H1 (cell line): ENCODE measurements at regions of chr2 and their contacts with region 1.

Region 1: GRCh38 chr2:26982102-26982742 is 11.8 kb downstream of the MAPRE3 start:
- DNase-seq: no peak
- H3K4me3 ChIP-seq: no peak overlapping the region
- H3K27ac ChIP-seq: no peak overlapping the region
- H3K4me1 ChIP-seq: no peaks in the 10 kb centered on the region
- H3K27me3 ChIP-seq: no peaks in the 10 kb centered on the region
- CTCF ChIP-seq: peak in 2 of 3 experiments; percentile 35 to 58; a peak in 3 of 4 replicates
- EP300 ChIP-seq: no peak
- POLR2A ChIP-seq: no peak
- RAD21 ChIP-seq: no peak; a peak in 1 of 4 replicates

Region 2: DNA sequence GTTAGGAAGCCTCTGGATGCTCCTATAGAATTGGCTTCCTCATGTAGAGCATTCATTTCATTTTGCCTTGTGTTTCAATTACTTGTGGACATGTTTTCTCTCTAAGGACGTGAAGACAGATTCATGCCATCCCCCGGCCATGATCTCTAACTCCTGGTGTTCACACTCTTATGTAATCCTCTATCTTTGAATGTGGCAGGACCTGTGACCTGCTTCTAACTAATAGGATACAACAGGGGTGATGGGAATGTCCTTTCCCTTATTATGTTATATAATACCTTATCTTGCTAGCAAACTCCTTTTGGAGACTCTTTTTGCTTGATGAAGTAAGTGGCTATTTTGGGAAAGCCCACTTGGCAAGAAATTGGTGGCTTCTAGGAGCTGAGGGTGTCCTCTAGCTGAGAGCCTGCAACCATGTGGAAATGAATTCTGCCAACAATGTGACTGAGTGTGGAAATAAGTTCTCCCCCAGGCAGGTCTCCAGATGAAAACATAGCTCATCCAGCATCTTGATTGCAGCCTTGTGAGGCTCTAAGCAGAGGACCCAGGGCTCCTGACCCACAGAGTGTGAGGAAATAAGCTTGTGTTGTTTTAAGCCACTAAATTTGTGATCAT is 120.5 kb before region 1 on chr2:
- CTCF ChIA-PET with region 1: no interaction called
- POLR2A ChIA-PET with region 1: no interaction called
- DNase-seq: peak in 1 of 2 experiments; percentile 4
- H3K4me3 ChIP-seq: no peak overlapping the region
- H3K27ac ChIP-seq: no peak overlapping the region
- H3K4me1 ChIP-seq: no peaks in the 10 kb centered on the region
- H3K27me3 ChIP-seq: peaks cover 0 to 2% (median 0%) of the 10 kb centered on the region in 4 experiments; a peak in 1 of 7 replicates
- CTCF ChIP-seq: no peak
- EP300 ChIP-seq: no peak
- POLR2A ChIP-seq: no peak
- RAD21 ChIP-seq: no peak

Region 3: DNA sequence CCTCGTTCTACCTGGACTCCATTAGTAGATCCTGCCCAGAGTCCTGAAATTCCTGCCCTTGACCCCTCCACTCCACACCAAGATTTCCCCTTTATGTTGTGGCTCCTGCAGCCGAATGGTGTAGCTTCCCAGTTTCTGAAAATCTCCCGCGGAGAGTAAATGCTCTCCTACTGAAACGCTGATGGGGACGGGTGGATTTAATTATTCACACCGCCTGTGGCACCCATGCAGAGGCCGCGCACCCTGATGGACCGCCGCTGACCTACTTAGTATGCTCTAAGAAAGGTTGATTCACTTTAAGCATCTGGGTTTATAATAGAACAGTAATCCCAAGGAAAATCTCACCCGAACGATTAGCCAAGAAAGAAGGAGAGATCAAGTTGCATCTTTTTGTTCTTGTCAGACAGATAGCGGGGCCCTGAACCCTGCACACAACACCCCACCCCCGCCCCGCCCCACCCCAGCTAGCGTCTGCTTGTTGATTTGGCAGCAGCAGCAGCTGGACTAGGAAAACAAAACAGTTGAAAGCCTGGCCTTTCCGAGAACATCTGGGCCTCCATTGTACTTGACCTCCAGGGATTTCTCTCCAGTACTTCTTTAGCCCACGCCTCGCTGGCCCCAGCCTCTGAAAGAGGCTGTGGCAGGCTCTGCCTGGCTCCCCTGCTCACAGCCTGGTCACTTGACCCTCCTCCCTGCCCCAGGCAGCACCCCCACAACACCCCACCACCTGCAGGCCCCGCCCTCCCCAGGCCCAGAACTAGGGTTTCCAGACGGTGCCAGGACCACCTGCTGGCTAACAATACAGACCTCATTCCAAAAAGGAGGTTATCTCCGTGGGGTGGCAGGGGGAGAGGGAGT is 80.7 kb before region 1 on chr2:
- CTCF ChIA-PET with region 1: no interaction called
- POLR2A ChIA-PET with region 1: no interaction called
- DNase-seq: no peak
- H3K4me3 ChIP-seq: peak overlapping the region in 1 of 4 experiments; percentile 41; a peak in 1 of 8 replicates
- H3K27ac ChIP-seq: no peak overlapping the region
- H3K4me1 ChIP-seq: peaks cover 8 to 17% (median 12%) of the 10 kb centered on the region in 4 experiments; a peak in 6 of 7 replicates
- H3K27me3 ChIP-seq: 0 out of 7 replicates have a peak, but pooled peaks cover 0 to 2% (median 0%) of the 10 kb centered on the region in 4 experiments
- CTCF ChIP-seq: no peak
- EP300 ChIP-seq: no peak
- POLR2A ChIP-seq: no peak
- RAD21 ChIP-seq: no peak

Region 4: DNA sequence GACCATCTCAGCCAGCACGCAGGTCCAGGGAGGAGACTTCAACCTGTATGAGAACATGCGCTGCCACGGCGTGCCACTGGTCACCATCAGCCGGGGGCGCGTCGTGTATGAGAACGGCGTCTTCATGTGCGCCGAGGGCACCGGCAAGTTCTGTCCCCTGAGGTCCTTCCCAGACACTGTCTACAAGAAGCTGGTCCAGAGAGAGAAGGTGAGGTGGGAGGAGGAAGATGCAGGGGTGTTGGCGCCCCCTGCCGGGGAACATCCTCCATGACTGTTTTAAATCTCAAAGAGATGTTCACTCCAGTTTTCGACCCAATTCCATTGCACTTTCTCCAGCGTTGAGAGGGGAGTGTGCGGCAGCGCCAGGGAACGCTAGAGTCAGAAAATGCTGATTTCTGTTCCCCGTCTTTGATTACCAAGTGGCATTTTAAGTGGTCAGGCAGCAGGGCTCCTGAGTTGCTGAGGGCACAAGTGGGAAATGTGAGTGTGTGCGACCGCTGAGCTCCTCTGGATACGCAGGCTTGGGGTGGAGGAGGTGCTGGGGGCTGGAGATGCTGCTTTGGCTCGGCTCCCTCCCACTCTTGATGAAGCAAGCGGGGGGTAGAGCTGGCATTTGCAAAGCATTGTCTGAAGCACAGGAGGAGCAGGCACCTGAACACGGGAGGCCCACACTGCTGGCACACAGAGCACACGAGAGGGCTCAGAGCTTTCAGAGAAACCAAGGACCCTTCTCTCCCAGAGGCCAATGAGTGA is 39.5 kb before region 1 on chr2:
- CTCF ChIA-PET with region 1: interaction called, 10 read pairs
- POLR2A ChIA-PET with region 1: no interaction called
- DNase-seq: peak; percentile 69 to 91
- H3K4me3 ChIP-seq: peak overlapping the region; percentile 37 to 59 (median 40); a peak in 7 of 8 replicates
- H3K27ac ChIP-seq: no peak overlapping the region
- H3K4me1 ChIP-seq: peaks cover 2 to 23% (median 7%) of the 10 kb centered on the region in 4 experiments
- H3K27me3 ChIP-seq: peaks cover 0 to 3% (median 0%) of the 10 kb centered on the region in 4 experiments; a peak in 1 of 7 replicates
- CTCF ChIP-seq: peak; percentile 85 to 90 (median 85)
- EP300 ChIP-seq: no peak
- POLR2A ChIP-seq: no peak
- RAD21 ChIP-seq: peak; percentile 82 to 89

Region 5: GRCh38 chr2:26959331-26959730 is 22.9 kb before region 1 on chr2:
- CTCF ChIA-PET with region 1: interaction called, 47 read pairs
- POLR2A ChIA-PET with region 1: interaction called, 3 read pairs
- DNase-seq: no peak
- H3K4me3 ChIP-seq: no peak overlapping the region
- H3K27ac ChIP-seq: no peak overlapping the region
- H3K4me1 ChIP-seq: peaks cover 0 to 2% (median 0%) of the 10 kb centered on the region in 4 experiments; a peak in 1 of 7 replicates
- H3K27me3 ChIP-seq: no peaks in the 10 kb centered on the region; a peak in 1 of 7 replicates
- CTCF ChIP-seq: no peak
- EP300 ChIP-seq: no peak
- POLR2A ChIP-seq: no peak
- RAD21 ChIP-seq: no peak

Region 6: DNA sequence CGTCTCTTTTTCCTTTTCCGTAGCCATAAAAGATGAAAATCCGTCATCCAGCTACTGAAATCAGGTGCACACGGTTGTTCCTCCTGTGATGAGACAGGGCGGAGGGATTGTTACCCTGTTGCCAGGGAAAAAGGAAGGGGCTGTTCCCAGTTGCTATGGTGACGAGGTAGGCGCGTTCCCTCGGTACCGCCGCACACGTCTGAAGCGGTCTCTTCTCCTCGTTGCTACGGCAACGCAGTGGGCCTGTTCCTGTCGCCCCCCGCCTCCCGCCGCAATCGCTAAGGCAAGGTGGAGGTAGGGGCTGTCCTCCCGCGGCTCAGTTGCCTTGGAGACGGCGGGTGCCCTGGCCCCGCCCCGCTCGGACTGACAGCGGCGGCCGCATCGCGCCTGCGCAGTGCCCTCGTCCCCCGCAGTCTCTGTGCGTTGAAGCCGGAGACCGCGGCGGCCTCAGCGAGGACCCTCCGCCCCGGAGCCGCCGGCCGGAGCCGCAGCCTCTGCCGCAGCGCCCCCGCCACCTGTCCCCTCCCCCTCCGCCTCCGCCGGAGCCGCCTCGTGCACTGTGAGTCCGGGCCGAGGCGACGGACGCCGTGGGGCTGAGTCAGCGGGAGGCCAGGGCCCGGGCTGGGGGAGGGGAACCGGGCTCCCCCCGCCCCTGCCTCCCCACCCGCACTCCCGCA is 11.8 kb before region 1 on chr2 and contains the start of gene MAPRE3:
- CTCF ChIA-PET with region 1: interaction called, 20 read pairs
- POLR2A ChIA-PET with region 1: interaction called, 12 read pairs
- DNase-seq: peak; percentile 90 to 97
- H3K4me3 ChIP-seq: peak within 1 kb of the TSS; percentile 63 to 95 (median 90)
- H3K27ac ChIP-seq: no peak within 1 kb of the TSS
- H3K4me1 ChIP-seq: peaks cover 0 to 6% (median 4%) of the 10 kb centered on the region in 4 experiments; a peak in 5 of 7 replicates
- H3K27me3 ChIP-seq: peaks cover 0 to 16% (median 3%) of the 10 kb centered on the region in 4 experiments; a peak in 4 of 7 replicates
- CTCF ChIP-seq: no peak
- EP300 ChIP-seq: no peak
- POLR2A ChIP-seq: no peak
- RAD21 ChIP-seq: no peak
- total RNA-seq, gene MAPRE3: 6.6 and 7.5 TPM in 2 replicates

Region 7: DNA sequence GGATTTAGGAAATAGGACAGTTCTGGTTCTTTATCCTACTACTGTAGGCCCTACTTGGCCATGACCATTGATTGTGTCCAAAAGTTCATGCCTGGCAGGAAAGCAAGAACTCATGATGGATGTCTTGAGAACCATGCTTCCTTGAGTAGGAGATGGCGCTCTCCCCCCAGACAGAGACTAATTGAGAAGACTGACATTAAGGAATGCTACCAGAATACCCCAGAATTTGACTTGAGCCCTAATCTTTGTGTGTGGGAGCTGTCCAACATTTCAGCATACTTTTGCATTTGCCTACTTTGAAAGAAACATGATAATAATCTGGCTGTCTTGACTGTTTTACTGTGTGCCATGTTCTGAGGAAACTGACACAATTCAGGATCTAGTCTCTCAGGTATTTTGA is 11.5 kb after region 1 on chr2:
- CTCF ChIA-PET with region 1: interaction called, 37 read pairs
- POLR2A ChIA-PET with region 1: interaction called, 3 read pairs
- DNase-seq: no peak
- H3K4me3 ChIP-seq: no peak overlapping the region
- H3K27ac ChIP-seq: no peak overlapping the region
- H3K4me1 ChIP-seq: no peaks in the 10 kb centered on the region
- H3K27me3 ChIP-seq: no peaks in the 10 kb centered on the region
- CTCF ChIP-seq: no peak
- EP300 ChIP-seq: no peak
- POLR2A ChIP-seq: no peak
- RAD21 ChIP-seq: no peak

Region 8: GRCh38 chr2:27010139-27010538 is 27.9 kb after region 1 on chr2:
- CTCF ChIA-PET with region 1: interaction called, 36 read pairs
- POLR2A ChIA-PET with region 1: no interaction called
- DNase-seq: no peak
- H3K4me3 ChIP-seq: no peak overlapping the region
- H3K27ac ChIP-seq: no peak overlapping the region
- H3K4me1 ChIP-seq: no peaks in the 10 kb centered on the region
- H3K27me3 ChIP-seq: no peaks in the 10 kb centered on the region; a peak in 1 of 7 replicates
- CTCF ChIP-seq: no peak
- EP300 ChIP-seq: no peak
- POLR2A ChIP-seq: no peak
- RAD21 ChIP-seq: no peak

Region 9: DNA sequence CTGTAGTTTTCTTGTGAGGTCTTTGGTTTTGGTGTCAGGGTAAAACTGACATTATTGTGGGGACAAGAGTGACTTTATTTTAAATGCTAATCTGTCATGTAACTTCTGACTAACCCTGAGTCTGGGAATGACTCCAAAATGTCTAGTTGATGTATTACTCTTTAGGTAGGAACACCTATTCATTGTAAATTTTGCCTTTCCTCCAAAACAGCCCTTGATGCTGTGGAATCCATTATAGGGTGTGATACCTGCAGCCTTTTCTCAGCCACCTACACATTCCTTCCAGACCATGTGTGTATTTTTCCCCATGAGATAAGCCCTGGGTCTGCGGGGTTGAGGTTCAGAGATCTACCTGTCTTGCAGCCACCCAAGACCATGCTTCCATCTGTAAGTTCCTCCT is 161.1 kb after region 1 on chr2:
- CTCF ChIA-PET with region 1: no interaction called
- POLR2A ChIA-PET with region 1: no interaction called
- DNase-seq: no peak
- H3K4me3 ChIP-seq: no peak overlapping the region
- H3K27ac ChIP-seq: no peak overlapping the region
- H3K4me1 ChIP-seq: no peaks in the 10 kb centered on the region
- H3K27me3 ChIP-seq: no peaks in the 10 kb centered on the region
- CTCF ChIP-seq: no peak
- EP300 ChIP-seq: no peak
- POLR2A ChIP-seq: no peak
- RAD21 ChIP-seq: no peak